ENCODE measurements at regions of chr9 and their contacts with region 1.

Region 1: DNA sequence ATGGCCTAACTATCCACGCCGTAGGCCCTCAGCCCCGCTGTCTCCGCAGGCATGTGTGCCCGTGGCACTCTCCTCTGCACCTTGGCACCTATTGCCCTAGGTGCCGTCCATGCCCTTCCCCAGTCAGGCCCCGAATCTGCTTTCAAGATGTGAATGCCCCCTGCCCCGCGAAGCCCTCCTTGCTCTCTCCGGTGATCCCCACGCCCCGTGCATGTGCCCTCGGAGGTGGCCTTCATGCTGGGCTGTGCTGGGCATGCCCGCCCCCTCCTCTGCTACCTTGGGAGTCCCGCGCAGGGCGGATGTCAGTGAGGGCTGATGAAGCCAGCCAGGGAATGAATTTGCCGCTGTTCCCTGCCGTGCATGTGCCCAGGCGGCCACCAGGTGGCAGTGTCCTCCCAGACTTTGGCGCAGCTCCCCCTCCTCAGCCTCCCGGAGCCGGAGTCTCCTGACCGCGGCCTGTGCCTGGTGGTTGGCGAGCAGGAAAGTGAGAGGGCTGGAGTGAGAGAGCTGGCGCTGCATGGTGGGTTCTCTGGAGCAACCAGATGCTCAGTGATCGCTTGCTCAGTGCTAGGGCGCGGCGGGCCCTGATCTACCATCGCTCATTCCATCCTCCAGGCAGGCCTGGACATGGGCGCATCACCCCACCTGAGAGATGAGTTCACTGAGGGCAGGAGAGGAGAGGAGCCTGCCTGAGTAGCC is 112.9 kb upstream of the LMX1B start:
- DNase-seq: peak; percentile 69 to 78 (median 73)
- ATAC-seq: peak; percentile 65
- H3K4me3 ChIP-seq: no peak overlapping the region
- H3K27ac ChIP-seq: no peak overlapping the region
- H3K4me1 ChIP-seq: peaks cover 22% of the 10 kb centered on the region
- H3K27me3 ChIP-seq: peaks cover 0 to 8% of the 10 kb centered on the region in 2 donors
- CTCF ChIP-seq: peak; percentile 87 to 94 (median 92)
- POLR2A ChIP-seq: no peak

Region 2: DNA sequence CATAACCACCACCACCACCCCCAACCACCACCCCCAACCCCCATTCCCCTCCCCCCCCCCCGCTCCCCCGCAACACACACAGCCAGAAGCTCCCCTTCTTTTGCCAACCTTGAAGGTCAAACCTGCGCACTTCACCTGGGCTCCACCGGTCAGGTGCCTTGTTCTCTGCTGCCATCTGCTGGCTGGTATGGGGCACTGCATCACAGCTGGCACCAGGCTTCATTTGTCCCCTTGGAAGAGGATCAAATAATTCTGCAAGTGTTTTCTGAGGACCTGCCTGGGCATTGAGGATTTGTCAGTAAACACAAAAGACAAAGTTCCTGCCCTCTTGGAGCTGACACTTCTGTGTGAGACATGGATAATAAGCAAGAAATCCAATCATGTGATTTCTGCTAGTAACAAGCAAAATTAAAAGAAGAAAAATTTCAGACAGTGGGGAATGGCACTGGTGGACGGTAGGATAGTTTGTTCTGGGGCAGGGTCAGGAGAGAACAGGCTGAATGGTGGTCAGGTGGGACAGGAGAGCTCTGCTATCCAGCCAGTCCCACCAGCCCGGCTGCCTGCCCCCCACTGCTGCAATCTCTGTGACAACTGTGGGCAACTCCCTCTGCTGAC is 57.3 kb after region 1 on chr9:
- intact Hi-C with region 1: loop called (anchors 5 kb)
- DNase-seq: peak; percentile 72 to 79 (median 75)
- ATAC-seq: peak; percentile 84
- H3K4me3 ChIP-seq: no peak overlapping the region
- H3K27ac ChIP-seq: no peak overlapping the region
- H3K4me1 ChIP-seq: no peaks in the 10 kb centered on the region
- H3K27me3 ChIP-seq: no peaks in the 10 kb centered on the region
- CTCF ChIP-seq: peak; percentile 91 to 98 (median 94)
- POLR2A ChIP-seq: no peak